ENCODE measurements at regions of chr1 and their contacts with region 1.

Region 1: DNA sequence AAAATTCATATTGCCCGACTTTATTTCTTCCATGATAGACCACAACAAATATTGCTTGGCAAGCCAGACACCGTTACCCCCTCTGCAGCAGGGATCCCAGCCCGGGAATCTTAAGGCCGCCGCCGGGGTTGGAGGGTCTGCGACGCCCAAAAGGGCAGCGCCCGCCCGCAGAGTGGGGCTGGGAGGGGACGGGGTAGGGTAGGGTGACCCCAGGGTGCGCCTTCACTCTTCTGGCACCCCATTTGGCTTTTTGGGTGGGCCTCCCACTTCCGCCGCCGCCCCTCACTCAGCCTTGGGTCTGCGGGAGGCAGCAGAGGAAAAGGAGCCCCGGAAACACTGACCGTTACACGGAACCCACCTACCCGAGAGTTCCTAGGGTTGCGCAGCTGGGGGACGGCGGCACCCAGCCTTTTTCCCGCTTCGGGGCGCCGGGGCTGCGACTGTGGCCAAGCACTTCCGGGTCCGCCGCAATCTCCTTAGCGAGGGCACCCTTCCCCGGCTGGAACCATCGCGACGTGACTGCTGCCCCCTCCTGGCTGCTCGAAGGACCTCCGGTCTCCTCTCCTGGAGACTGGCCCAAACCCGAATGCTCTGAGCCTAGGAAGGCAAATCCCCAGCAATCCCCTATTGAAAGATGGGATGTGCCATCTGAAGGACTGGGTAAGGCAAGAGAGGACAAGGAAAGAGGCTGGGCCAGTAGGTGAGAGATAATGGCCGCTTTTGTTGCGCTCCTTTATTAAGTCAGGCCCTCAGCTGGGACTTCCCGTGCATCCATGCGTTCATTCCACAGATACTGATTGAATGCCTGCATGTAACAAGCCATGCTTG is at the start of gene PIGC:
- DNase-seq: peak; percentile 79 to 95 (median 89)
- ATAC-seq: peak; percentile 99
- H3K4me3 ChIP-seq: peak within 1 kb of the TSS; percentile 84 to 94
- H3K4me3 Mint-ChIP-seq: peak within 1 kb of the TSS; percentile 83 to 95 (median 94)
- H3K27ac ChIP-seq: peak within 1 kb of the TSS; percentile 86
- H3K27ac Mint-ChIP-seq: peak within 1 kb of the TSS; percentile 94 to 96
- H3K4me1 ChIP-seq: peaks cover 15% of the 10 kb centered on the region in 2 experiments
- H3K4me1 Mint-ChIP-seq: peaks cover 45 to 50% (median 48%) of the 10 kb centered on the region in 3 donors
- H3K27me3 ChIP-seq: no peaks in the 10 kb centered on the region
- H3K27me3 Mint-ChIP-seq: no peaks in the 10 kb centered on the region
- total RNA-seq, gene PIGC: 26.9 to 39.0 (median 34.5) TPM

Region 2: GRCh38 chr1:172002725-172003345 is 441.0 kb before region 1 on chr1:
- CTCF ChIA-PET with region 1: interaction called, 7 to 19 read pairs
- POLR2A ChIA-PET with region 1: no interaction called
- DNase-seq: peak in 17 of 35 experiments; percentile 1 to 62 (median 11)
- ATAC-seq: peak in 1 of 4 experiments; percentile 32
- H3K4me3 ChIP-seq: no peak overlapping the region
- H3K4me3 Mint-ChIP-seq: no peak overlapping the region
- H3K27ac ChIP-seq: no peak overlapping the region
- H3K27ac Mint-ChIP-seq: no peak overlapping the region
- H3K4me1 ChIP-seq: no peaks in the 10 kb centered on the region
- H3K4me1 Mint-ChIP-seq: peaks cover 6 to 11% (median 11%) of the 10 kb centered on the region in 3 donors
- H3K27me3 ChIP-seq: no peaks in the 10 kb centered on the region
- H3K27me3 Mint-ChIP-seq: no peaks in the 10 kb centered on the region

Region 3: DNA sequence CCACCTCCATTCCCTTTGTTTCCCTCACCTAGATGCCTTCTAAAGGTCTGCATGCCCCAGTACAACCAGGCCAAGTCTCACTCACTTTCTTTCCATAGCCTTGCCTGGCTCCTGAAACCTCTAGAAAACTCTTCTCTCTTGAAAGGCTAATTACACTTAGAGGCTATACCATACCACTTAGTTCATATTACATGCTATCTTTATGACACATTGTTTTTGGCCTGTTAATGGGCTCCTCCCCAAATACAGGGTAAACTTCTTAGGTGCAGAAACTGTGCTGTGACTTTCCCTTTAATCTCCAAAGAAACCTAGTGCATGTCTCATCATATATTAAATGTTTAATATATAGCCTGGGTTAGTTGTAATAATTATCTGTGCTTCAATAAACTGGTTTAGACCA is 80.0 kb before region 1 on chr1:
- CTCF ChIA-PET with region 1: no interaction called
- POLR2A ChIA-PET with region 1: no interaction called
- DNase-seq: no peak
- ATAC-seq: no peak
- H3K4me3 ChIP-seq: no peak overlapping the region
- H3K4me3 Mint-ChIP-seq: no peak overlapping the region
- H3K27ac ChIP-seq: no peak overlapping the region
- H3K27ac Mint-ChIP-seq: no peak overlapping the region
- H3K4me1 ChIP-seq: peaks cover 14 to 16% of the 10 kb centered on the region in 2 experiments
- H3K4me1 Mint-ChIP-seq: peaks cover 10 to 20% (median 10%) of the 10 kb centered on the region in 3 donors
- H3K27me3 ChIP-seq: no peaks in the 10 kb centered on the region
- H3K27me3 Mint-ChIP-seq: no peaks in the 10 kb centered on the region

Region 4: DNA sequence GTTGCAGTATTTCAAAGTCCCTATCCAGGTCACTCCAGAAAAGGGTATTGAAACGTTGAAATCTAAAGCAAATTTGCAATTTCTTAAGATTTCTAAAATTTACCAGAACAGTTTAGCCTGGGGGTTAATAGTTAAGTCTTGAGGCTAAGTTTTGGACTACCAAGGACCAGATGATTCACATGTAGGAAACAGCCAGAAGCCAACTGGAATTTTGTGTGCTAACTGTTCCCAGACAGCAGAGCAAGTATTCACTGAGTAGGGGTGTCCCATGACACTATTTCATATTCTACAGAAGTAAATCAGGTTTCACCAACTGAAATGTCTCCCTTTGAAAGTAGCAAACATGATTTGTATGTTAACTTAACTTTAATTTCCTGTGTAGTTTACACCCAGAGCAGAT is 34.9 kb before region 1 on chr1:
- CTCF ChIA-PET with region 1: no interaction called
- POLR2A ChIA-PET with region 1: no interaction called
- DNase-seq: no peak
- ATAC-seq: no peak
- H3K4me3 ChIP-seq: no peak overlapping the region
- H3K4me3 Mint-ChIP-seq: no peak overlapping the region
- H3K27ac ChIP-seq: no peak overlapping the region
- H3K27ac Mint-ChIP-seq: no peak overlapping the region
- H3K4me1 ChIP-seq: no peaks in the 10 kb centered on the region
- H3K4me1 Mint-ChIP-seq: peaks cover 0 to 4% (median 0%) of the 10 kb centered on the region in 3 donors
- H3K27me3 ChIP-seq: no peaks in the 10 kb centered on the region
- H3K27me3 Mint-ChIP-seq: no peaks in the 10 kb centered on the region

Region 5: DNA sequence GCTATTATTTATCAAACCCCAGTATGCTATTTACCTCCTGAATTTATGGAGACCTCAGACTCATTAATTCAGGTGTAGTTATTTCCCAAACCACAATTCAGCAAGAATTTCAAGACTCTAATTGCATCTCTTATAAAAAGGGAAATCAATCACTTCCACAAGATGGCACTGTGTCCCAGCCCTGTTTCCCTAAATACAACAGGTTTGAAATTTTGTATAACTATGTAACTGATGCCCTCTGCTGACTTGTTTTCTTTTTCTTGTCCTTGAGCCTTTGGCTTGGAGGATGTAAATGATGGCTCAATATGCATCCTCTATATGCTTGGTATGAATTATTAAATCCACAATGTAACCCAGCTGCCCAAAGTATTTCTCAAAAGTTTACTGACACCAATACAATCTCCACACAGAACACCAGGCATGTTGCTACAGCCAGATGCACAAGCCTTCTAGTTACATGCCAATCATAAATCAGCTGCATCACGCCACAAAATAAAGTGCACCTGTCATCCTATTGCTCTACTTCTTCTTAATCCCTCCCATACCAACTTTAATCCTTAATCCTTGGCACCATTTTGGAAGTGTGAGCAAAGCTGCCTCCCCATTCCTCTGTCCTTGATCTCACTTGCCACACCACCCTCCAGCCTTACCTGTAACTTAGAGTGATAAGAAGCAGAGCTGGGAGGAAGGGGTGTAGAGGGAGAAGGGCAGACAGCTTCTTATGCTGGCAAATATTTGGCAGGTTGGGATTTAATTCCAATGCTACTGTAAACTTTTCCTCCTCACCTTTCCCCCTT is 14.3 kb before region 1 on chr1:
- CTCF ChIA-PET with region 1: interaction called, 8 to 42 read pairs
- POLR2A ChIA-PET with region 1: interaction called, 3 read pairs
- DNase-seq: peak in 28 of 35 experiments; percentile 16 to 81 (median 40)
- ATAC-seq: peak; percentile 51 to 76 (median 62)
- H3K4me3 ChIP-seq: no peak overlapping the region
- H3K4me3 Mint-ChIP-seq: no peak overlapping the region
- H3K27ac ChIP-seq: no peak overlapping the region
- H3K27ac Mint-ChIP-seq: peak overlapping the region; percentile 65 to 84
- H3K4me1 ChIP-seq: peaks cover 40 to 62% of the 10 kb centered on the region in 2 experiments
- H3K4me1 Mint-ChIP-seq: peaks cover 40 to 52% (median 50%) of the 10 kb centered on the region in 3 donors
- H3K27me3 ChIP-seq: no peaks in the 10 kb centered on the region
- H3K27me3 Mint-ChIP-seq: no peaks in the 10 kb centered on the region

Measured in T-cell (primary cell).